MCF 10A (cell line): ENCODE measurements at regions of chr7 and their contacts with region 1.

Region 1: GRCh38 chr7:44885394-44886317 is at the start of gene PURB:
- DNase-seq: peak; percentile 96
- H3K4me3 Mint-ChIP-seq: peak within 1 kb of the TSS; percentile 93
- H3K27ac Mint-ChIP-seq: peak within 1 kb of the TSS; percentile 99
- H3K4me1 Mint-ChIP-seq: peaks cover 25% of the 10 kb centered on the region
- H3K27me3 Mint-ChIP-seq: no peaks in the 10 kb centered on the region
- CTCF ChIP-seq: no peak
- total RNA-seq, gene PURB: 21.3 and 27.9 TPM in 2 replicates

Region 2: DNA sequence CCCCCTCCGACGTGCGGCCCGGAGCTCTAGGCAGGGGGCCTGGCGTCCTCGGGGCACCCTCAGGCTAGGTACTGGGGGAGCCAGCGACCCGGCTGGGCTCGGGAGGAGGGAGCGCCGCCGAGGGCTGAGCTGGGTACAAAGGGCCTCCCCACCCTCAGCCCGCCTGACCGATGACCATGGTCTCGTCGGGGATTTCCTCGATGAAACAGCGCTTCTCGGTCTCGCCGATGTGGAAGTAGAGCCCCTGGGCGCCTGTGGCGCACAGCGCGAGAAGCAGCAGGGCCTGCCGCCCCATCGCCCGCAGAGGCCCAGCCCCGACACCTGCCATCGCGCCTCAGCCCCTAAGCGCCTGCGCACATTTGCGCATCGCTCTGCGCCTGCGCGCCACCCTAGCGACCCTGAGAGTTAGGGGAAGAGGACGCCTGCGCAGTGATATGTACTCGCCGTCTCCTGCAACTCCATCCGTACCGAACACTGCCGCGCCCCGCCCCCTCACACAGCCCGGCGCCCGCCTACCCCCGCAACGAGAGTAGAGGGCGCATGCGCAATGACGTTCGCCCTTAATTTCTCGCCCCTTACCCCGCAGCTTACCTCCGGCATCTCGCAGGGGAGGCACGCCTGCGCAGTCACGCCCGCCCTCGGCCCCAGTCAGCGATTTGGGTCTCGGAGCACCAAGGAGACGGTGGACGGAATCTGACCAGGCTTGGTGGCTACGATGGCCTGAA is 303.6 kb before region 1 on chr7 and contains the start of gene TMED4:
- CTCF ChIA-PET with region 1: no interaction called
- POLR2A ChIA-PET with region 1: interaction called, 24 read pairs
- intact Hi-C with region 1: no loop called
- DNase-seq: peak; percentile 99
- H3K4me3 Mint-ChIP-seq: peak within 1 kb of the TSS; percentile 85
- H3K27ac Mint-ChIP-seq: peak within 1 kb of the TSS; percentile 93
- H3K4me1 Mint-ChIP-seq: peaks cover 6% of the 10 kb centered on the region
- H3K27me3 Mint-ChIP-seq: no peaks in the 10 kb centered on the region
- CTCF ChIP-seq: no peak
- total RNA-seq, gene TMED4: 49.7 and 58.0 TPM in 2 replicates

Region 3: GRCh38 chr7:44693721-44694285 is 191.9 kb before region 1 on chr7:
- CTCF ChIA-PET with region 1: no interaction called
- POLR2A ChIA-PET with region 1: no interaction called
- intact Hi-C with region 1: no loop called
- DNase-seq: peak; percentile 63
- H3K4me3 Mint-ChIP-seq: no peak overlapping the region
- H3K27ac Mint-ChIP-seq: peak overlapping the region; percentile 92
- H3K4me1 Mint-ChIP-seq: peaks cover 8% of the 10 kb centered on the region
- H3K27me3 Mint-ChIP-seq: no peaks in the 10 kb centered on the region
- CTCF ChIP-seq: no peak

Region 4: GRCh38 chr7:44858161-44858560 is 27.5 kb before region 1 on chr7:
- CTCF ChIA-PET with region 1: interaction called, 23 read pairs
- POLR2A ChIA-PET with region 1: interaction called, 29 read pairs
- intact Hi-C with region 1: no loop called
- DNase-seq: no peak
- H3K4me3 Mint-ChIP-seq: no peak overlapping the region
- H3K27ac Mint-ChIP-seq: no peak overlapping the region
- H3K4me1 Mint-ChIP-seq: no peaks in the 10 kb centered on the region
- H3K27me3 Mint-ChIP-seq: no peaks in the 10 kb centered on the region
- CTCF ChIP-seq: no peak

Region 5: GRCh38 chr7:44872787-44873186 is 12.9 kb before region 1 on chr7:
- CTCF ChIA-PET with region 1: interaction called, 11 read pairs
- POLR2A ChIA-PET with region 1: interaction called, 31 read pairs
- intact Hi-C with region 1: no loop called
- DNase-seq: no peak
- H3K4me3 Mint-ChIP-seq: no peak overlapping the region
- H3K27ac Mint-ChIP-seq: no peak overlapping the region
- H3K4me1 Mint-ChIP-seq: no peaks in the 10 kb centered on the region
- H3K27me3 Mint-ChIP-seq: no peaks in the 10 kb centered on the region
- CTCF ChIP-seq: no peak

Region 6: GRCh38 chr7:44986218-44987053 is 100.8 kb after region 1 on chr7:
- CTCF ChIA-PET with region 1: interaction called, 4 read pairs
- POLR2A ChIA-PET with region 1: interaction called, 79 read pairs
- intact Hi-C with region 1: loop called (anchors 10 kb)
- DNase-seq: peak; percentile 92
- H3K4me3 Mint-ChIP-seq: peak overlapping the region; percentile 82
- H3K27ac Mint-ChIP-seq: peak overlapping the region; percentile 98
- H3K4me1 Mint-ChIP-seq: peaks cover 38% of the 10 kb centered on the region
- H3K27me3 Mint-ChIP-seq: no peaks in the 10 kb centered on the region
- CTCF ChIP-seq: no peak

Region 7: DNA sequence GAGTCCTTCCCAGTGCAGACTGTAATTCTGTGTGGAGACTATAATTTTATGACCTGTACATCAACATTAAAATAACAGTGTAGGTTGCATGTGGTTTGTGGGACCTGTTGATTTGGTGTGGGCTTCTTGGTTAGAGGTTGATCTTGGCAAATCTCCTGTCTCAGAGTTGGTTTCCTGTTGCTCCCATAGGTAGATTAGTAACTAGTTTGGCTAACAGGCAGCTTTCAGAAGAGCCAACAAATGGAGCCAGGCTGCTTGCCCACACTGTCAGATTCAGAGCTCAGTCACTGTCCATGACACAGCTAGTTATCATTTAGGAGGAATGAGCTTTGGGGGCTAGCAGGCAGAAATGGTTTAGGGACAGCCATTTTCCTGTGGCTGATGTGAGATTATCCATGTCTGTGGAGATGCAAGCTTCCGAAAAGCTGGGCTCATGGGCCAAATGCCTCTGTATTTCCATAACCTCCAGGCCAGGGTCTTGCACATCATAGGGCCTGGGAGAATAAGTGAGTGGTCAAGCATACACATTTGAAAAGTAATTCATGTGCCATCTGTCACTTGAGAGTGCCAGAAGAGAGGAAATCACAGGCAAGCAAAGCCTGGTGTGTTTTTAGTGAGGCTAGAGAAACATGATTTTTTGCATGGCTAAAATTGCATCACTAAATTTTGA is 147.7 kb after region 1 on chr7:
- CTCF ChIA-PET with region 1: no interaction called
- POLR2A ChIA-PET with region 1: interaction called, 13 read pairs
- intact Hi-C with region 1: no loop called
- DNase-seq: peak; percentile 50
- H3K4me3 Mint-ChIP-seq: no peak overlapping the region
- H3K27ac Mint-ChIP-seq: peak overlapping the region; percentile 90
- H3K4me1 Mint-ChIP-seq: peaks cover 33% of the 10 kb centered on the region
- H3K27me3 Mint-ChIP-seq: no peaks in the 10 kb centered on the region
- CTCF ChIP-seq: no peak

Region 8: GRCh38 chr7:45136106-45137060 is 250.7 kb after region 1 on chr7:
- CTCF ChIA-PET with region 1: interaction called, 6 read pairs
- POLR2A ChIA-PET with region 1: interaction called, 13 read pairs
- intact Hi-C with region 1: loop called (anchors 10 kb)
- DNase-seq: peak; percentile 90
- H3K4me3 Mint-ChIP-seq: no peak overlapping the region
- H3K27ac Mint-ChIP-seq: no peak overlapping the region
- H3K4me1 Mint-ChIP-seq: peaks cover 10% of the 10 kb centered on the region
- H3K27me3 Mint-ChIP-seq: peaks cover 27% of the 10 kb centered on the region
- CTCF ChIP-seq: peak; percentile 86

Region 9: DNA sequence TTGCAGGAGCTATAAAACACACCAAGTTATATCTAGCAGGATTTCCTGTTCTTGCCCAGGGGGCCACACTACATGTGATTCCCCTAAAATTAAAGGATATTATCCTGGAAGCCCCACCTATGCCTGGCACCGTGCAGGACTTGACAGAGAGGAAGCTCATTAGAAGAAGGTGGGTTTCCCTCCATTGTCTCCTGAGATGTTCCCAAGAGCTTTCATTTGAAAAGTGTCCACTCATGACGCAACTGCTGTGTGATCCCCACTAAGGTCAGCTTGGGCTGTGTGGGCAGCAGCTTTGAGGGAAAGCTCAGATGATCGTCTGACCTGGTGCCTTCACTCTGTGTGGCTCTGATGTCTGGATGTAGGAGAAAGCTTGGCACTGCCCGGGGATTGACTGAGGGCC is 325.4 kb after region 1 on chr7:
- CTCF ChIA-PET with region 1: no interaction called
- POLR2A ChIA-PET with region 1: no interaction called
- intact Hi-C with region 1: no loop called
- DNase-seq: no peak
- H3K4me3 Mint-ChIP-seq: no peak overlapping the region
- H3K27ac Mint-ChIP-seq: no peak overlapping the region
- H3K4me1 Mint-ChIP-seq: peaks cover 11% of the 10 kb centered on the region
- H3K27me3 Mint-ChIP-seq: peaks cover 95% of the 10 kb centered on the region
- CTCF ChIP-seq: no peak